ENCODE measurements at regions of chr6 and their contacts with region 1.

Region 1: GRCh38 chr6:38973178-38974054 is 75.2 kb upstream of the GLP1R start:
- DNase-seq: no peak
- ATAC-seq: peak; percentile 67 to 76 (median 72)
- H3K4me3 ChIP-seq: no peak overlapping the region
- H3K27ac ChIP-seq: no peak overlapping the region
- H3K4me1 ChIP-seq: peaks cover 0 to 7% (median 0%) of the 10 kb centered on the region in 12 donors
- H3K27me3 ChIP-seq: peaks cover 0 to 13% (median 2%) of the 10 kb centered on the region in 9 donors
- CTCF ChIP-seq: peak; percentile 31 to 70 (median 57)
- POLR2A ChIP-seq: no peak

Region 2: DNA sequence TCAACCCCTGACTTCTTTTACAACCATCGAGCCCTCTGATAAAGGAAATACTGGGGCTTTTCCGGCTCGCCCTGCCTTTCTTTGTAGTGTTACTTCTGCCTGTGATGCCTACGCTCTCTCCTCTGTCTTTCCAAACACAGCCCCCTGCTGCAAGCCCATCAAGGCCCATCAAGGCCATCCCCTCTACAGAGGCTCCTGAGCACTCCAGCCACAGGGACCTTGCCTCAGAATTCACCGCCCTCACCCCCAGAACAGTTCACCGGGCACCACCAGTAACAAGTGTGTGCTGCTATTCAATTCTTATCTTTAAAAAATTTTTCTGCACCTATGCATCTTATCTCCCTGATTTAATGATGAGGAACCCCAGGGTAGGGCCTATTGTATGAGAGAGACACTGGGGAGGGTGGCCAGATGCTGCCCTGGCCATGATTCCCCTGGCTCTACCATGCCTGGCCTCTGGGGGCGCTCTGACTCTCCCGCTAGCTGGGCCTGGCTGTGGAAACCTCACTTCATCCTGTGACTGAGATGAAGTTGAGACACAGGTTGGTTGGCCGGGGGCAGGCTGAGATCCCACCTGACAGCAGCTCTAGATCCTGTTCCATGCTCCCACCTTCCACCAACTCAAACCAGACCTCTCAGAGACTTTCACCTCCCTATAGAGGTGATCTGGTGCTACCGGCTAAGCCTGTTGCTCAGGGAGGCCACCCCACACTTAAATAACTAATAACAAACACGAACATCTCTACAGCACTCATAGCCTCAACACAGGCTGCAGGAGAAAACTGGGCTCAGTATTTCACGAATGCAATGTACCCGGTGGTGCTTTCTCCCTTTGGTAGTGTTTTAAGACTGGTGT is 56.0 kb after region 1 on chr6:
- intact Hi-C with region 1: no loop called
- DNase-seq: no peak
- ATAC-seq: peak in 1 of 4 donors; percentile 38
- H3K4me3 ChIP-seq: no peak overlapping the region
- H3K27ac ChIP-seq: no peak overlapping the region
- H3K4me1 ChIP-seq: no peaks in the 10 kb centered on the region
- H3K27me3 ChIP-seq: peaks cover 0 to 22% (median 4%) of the 10 kb centered on the region in 9 donors
- CTCF ChIP-seq: peak; percentile 17 to 63 (median 42)
- POLR2A ChIP-seq: no peak

Region 3: GRCh38 chr6:39088331-39088730 is 114.9 kb after region 1 on chr6:
- intact Hi-C with region 1: loop called in 2 of 10 experiments (anchors 5 to 10 kb)
- DNase-seq: peak in 4 of 5 donors; percentile 43 to 73 (median 52)
- ATAC-seq: peak; percentile 79 to 95 (median 88)
- H3K4me3 ChIP-seq: no peak overlapping the region
- H3K27ac ChIP-seq: no peak overlapping the region
- H3K4me1 ChIP-seq: peaks cover 0 to 23% (median 10%) of the 10 kb centered on the region in 12 donors
- H3K27me3 ChIP-seq: peaks cover 0 to 11% (median 0%) of the 10 kb centered on the region in 9 donors
- CTCF ChIP-seq: peak; percentile 21 to 64 (median 42)
- POLR2A ChIP-seq: no peak

Region 4: DNA sequence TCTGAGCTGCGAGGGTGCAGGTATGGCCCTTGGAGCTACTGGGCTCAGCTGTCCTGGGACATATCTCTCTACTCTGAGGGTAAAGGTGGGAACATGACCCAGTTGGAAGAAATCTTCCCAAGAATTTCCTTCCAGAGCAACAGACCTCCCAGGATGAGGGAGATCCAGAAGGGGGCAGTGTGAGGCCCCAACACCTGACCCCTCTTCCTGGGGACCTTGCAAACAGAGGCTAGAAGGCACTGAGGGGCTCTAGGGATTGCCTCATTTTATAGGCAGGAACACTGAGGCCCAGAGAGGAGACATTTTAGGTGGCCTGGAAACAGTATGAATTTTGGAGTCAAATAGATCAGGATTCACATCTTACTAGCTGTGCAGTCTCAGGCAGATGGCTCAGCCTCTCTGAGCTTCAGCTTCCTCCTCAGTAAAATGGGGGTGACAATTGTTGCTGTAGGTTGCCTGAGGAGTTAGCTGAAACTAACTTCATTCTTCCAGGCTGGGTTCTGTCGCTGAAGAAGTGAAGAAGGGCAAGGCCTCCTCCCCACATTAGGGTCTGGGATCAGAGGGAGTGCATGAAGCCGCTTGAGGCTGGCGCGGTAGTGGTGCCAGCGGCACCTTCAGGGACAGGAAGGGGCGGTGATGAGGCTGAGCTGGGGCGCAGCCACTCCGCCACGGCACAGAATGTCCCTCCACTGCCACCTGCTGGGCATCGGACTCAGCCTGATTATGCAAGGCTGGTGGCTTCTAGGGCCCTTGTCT is 329.4 kb after region 1 on chr6:
- intact Hi-C with region 1: loop called in 9 of 10 experiments (anchors 1 to 5 kb)
- DNase-seq: peak; percentile 71 to 91 (median 77)
- ATAC-seq: peak; percentile 82 to 93 (median 90)
- H3K4me3 ChIP-seq: no peak overlapping the region
- H3K27ac ChIP-seq: no peak overlapping the region
- H3K4me1 ChIP-seq: peaks cover 0 to 5% (median 0%) of the 10 kb centered on the region in 12 donors
- H3K27me3 ChIP-seq: peaks cover 0 to 19% (median 0%) of the 10 kb centered on the region in 9 donors
- CTCF ChIP-seq: peak; percentile 76 to 90 (median 82)
- POLR2A ChIP-seq: no peak

Region 5: DNA sequence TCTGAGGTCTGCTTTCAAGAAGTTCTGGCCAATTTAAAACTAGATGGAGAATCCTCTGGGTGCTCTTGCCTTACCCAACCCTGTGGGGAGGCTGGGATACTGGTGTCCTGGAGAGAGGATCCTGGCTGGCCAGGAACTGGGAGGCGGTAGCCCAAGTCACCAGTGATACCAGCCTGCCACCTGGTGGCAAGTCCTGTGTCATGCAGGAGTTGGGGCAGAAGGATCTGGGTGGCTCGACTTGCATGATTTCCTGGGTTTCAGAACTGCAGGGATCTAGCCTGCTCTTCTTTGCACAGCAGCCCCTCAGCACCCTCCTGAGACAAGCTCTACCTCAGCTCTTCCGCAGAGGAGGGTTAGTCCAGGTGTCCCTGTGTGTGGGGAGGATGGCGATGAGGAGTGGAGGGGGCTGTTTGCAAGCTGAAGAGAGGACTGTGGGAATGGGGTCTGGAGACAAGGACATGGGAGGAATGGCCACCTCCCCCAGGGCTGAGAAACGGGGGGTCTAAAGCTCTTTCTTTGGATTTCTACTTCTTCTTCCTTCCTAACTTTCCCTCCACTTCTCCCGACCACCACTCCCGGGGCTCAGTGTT is 336.6 kb after region 1 on chr6:
- intact Hi-C with region 1: loop called in 2 of 10 experiments (anchors 2 to 5 kb)
- DNase-seq: peak; percentile 50 to 82 (median 68)
- ATAC-seq: peak in 3 of 4 donors; percentile 73 to 87 (median 79)
- H3K4me3 ChIP-seq: no peak overlapping the region
- H3K27ac ChIP-seq: no peak overlapping the region
- H3K4me1 ChIP-seq: peaks cover 0 to 17% (median 10%) of the 10 kb centered on the region in 12 donors
- H3K27me3 ChIP-seq: peaks cover 17 to 55% (median 39%) of the 10 kb centered on the region in 9 donors
- CTCF ChIP-seq: peak; percentile 77 to 89 (median 84)
- POLR2A ChIP-seq: no peak

Region 6: DNA sequence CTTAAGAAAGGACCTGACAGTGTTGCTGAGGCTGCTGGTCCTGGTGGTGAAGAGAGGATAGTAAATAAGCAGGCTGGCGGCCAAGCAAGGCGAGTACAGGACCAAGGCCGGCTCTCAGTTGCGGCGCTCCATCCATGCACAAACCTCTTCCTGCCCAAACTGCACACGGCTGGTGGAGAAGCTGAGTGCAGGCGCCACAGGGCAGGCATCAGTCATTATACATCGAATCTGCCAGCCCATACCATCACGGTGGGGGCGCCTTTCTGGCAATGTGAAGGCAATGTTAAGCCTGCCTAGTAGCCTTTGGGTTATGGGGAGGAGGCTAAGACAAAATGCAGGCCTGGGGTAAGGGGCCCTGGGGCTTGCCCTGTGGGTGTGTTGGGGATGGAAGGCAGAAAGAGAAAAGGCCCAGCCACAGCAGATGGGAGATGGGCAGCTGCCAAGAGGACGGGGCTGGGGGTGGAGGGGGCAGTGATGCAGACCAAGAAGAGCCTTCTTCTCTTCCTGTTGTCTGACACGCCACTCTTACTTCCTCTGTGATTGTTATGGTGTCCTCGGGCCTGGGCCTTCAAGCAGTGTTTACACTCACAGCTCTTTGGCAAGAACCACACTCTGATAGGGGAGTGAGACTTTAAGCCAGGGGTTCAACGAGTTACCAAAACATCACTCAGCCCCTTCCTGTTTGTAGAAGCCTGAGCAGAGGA is 369.4 kb after region 1 on chr6:
- intact Hi-C with region 1: no loop called
- DNase-seq: peak in 1 of 5 donors; percentile 20
- ATAC-seq: peak in 1 of 4 donors; percentile 33
- H3K4me3 ChIP-seq: no peak overlapping the region
- H3K27ac ChIP-seq: peak overlapping the region in 1 of 12 donors; percentile 19
- H3K4me1 ChIP-seq: peaks cover 0 to 27% (median 11%) of the 10 kb centered on the region in 12 donors
- H3K27me3 ChIP-seq: peaks cover 0 to 5% (median 0%) of the 10 kb centered on the region in 9 donors
- CTCF ChIP-seq: no peak
- POLR2A ChIP-seq: no peak